B cell (primary cell): ENCODE measurements at regions of chr10 and their contacts with region 1.

Region 1: DNA sequence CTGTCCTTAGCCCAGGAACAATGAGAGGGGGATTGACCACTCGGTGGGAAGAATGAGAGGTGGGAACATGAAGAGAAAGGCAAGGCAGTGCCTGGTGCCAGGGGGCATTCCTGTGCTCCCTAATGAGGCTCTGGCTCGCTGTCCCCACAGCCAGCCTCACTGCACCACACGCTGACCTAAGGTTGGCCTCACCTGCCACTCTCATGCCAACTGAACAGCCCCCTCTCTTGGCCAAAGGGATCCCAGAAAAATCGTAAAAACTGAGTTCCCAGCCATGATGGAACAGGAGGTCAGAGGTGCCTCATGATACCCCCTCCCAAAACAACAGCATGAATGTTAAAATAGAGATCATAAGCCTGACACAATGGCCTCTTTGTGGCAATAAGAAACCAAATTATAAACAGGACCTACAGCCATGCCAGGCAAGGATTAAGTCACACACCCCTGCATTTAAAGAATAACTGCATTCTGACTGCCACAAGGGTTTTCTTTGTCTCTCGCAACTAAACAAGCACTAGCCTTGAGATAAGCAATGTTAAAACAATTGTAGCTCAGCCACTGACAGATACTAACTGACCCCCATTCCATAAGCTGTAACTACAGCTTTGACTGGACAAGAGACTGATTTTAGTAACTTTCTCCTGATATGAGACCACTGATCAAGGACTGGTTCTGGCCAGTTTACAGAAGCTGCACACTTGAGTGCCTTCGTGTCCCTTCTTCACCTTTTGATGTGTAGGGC is 149.2 kb downstream of the SH2D4B start:
- DNase-seq: no peak
- ATAC-seq: no peak
- H3K4me3 ChIP-seq: no peak overlapping the region
- H3K4me3 Mint-ChIP-seq: no peak overlapping the region
- H3K27ac ChIP-seq: no peak overlapping the region
- H3K27ac Mint-ChIP-seq: no peak overlapping the region
- H3K4me1 ChIP-seq: no peaks in the 10 kb centered on the region
- H3K4me1 Mint-ChIP-seq: no peaks in the 10 kb centered on the region
- H3K27me3 ChIP-seq: peaks cover 0 to 2% (median 0%) of the 10 kb centered on the region in 4 experiments
- H3K27me3 Mint-ChIP-seq: peaks cover 16% of the 10 kb centered on the region
- CTCF ChIP-seq: no peak

Region 2: DNA sequence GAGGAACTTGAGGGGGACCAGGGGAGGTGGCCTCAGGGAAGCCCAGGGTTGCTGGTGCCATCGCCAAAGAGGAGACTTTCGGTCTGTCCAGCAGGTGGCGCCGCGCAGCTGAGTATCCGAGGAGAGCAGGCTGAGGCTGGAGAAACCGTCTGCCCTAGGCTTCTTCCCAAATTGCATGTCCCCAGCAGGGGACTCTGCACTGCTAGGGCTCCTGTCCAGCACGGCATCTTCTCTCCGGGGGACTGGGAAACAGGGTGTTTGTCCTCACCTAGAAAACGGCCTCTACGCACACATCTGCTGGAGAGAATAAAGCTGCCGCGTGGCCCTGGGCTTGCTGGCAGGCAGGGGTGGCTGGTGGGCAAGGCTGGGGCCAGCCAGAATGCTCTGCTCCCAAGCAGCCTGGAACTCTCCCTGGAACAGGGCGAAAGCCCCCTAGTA is 12.7 kb after region 1 on chr10:
- CTCF ChIA-PET with region 1: interaction called, 10 read pairs
- POLR2A ChIA-PET with region 1: no interaction called
- intact Hi-C with region 1: no loop called
- DNase-seq: peak; percentile 55
- ATAC-seq: no peak
- H3K4me3 ChIP-seq: no peak overlapping the region
- H3K4me3 Mint-ChIP-seq: no peak overlapping the region
- H3K27ac ChIP-seq: no peak overlapping the region
- H3K27ac Mint-ChIP-seq: no peak overlapping the region
- H3K4me1 ChIP-seq: peaks cover 0 to 2% of the 10 kb centered on the region in 2 donors
- H3K4me1 Mint-ChIP-seq: no peaks in the 10 kb centered on the region
- H3K27me3 ChIP-seq: no peaks in the 10 kb centered on the region
- H3K27me3 Mint-ChIP-seq: peaks cover 10% of the 10 kb centered on the region
- CTCF ChIP-seq: peak; percentile 83